ENCODE measurements at regions of chr3 and their contacts with region 1.

Region 1: GRCh38 chr3:103924544-103924943 is 1442.2 kb upstream of the ALCAM start:
- DNase-seq: no peak
- ATAC-seq: no peak
- H3K4me3 ChIP-seq: no peak overlapping the region
- H3K27ac ChIP-seq: no peak overlapping the region
- H3K4me1 ChIP-seq: no peaks in the 10 kb centered on the region
- H3K27me3 ChIP-seq: no peaks in the 10 kb centered on the region; a peak in 1 of 5 replicates
- CTCF ChIP-seq: no peak
- EP300 ChIP-seq: no peak
- POLR2A ChIP-seq: no peak
- RAD21 ChIP-seq: no peak

Region 2: DNA sequence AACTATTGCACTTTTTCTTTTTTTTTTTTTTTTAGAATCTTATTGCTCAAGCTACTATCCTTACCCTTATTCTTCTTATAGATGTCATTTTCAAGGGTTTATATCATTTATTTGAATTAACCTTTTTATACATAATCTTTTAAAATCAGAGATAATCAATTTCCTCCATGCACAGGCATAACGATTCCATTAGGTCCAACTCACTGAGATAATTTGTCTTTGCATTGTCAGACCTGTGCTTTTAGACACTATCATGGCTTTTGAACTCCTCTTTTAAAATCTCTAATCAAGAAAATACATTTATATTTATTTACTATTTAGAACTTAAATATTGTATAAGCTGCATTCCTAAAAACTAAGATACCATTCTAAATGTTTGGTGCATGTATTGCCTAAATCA is 34.9 kb before region 1 on chr3:
- CTCF ChIA-PET with region 1: no interaction called
- POLR2A ChIA-PET with region 1: no interaction called
- in situ Hi-C with region 1: no loop called
- intact Hi-C with region 1: no loop called
- DNase-seq: no peak
- ATAC-seq: no peak
- H3K4me3 ChIP-seq: no peak overlapping the region
- H3K27ac ChIP-seq: no peak overlapping the region
- H3K4me1 ChIP-seq: no peaks in the 10 kb centered on the region
- H3K27me3 ChIP-seq: no peaks in the 10 kb centered on the region
- CTCF ChIP-seq: no peak
- EP300 ChIP-seq: no peak
- POLR2A ChIP-seq: no peak
- RAD21 ChIP-seq: no peak

Region 3: GRCh38 chr3:103937094-103937493 is 12.6 kb after region 1 on chr3:
- CTCF ChIA-PET with region 1: no interaction called
- POLR2A ChIA-PET with region 1: no interaction called
- in situ Hi-C with region 1: no loop called
- intact Hi-C with region 1: loop called (anchors 2 kb)
- DNase-seq: no peak
- ATAC-seq: no peak
- H3K4me3 ChIP-seq: no peak overlapping the region
- H3K27ac ChIP-seq: no peak overlapping the region
- H3K4me1 ChIP-seq: no peaks in the 10 kb centered on the region
- H3K27me3 ChIP-seq: no peaks in the 10 kb centered on the region
- CTCF ChIP-seq: no peak
- EP300 ChIP-seq: no peak
- POLR2A ChIP-seq: no peak
- RAD21 ChIP-seq: no peak